CD4-positive, alpha-beta memory T cell (primary cell): ENCODE measurements at regions of chr19 and their contacts with region 1.

Region 1: GRCh38 chr19:7535035-7535992 is at the start of gene PNPLA6:
- DNase-seq: peak; percentile 89 to 93 (median 91)
- H3K4me3 ChIP-seq: peak within 1 kb of the TSS; percentile 80 to 93
- H3K4me3 Mint-ChIP-seq: peak within 1 kb of the TSS; percentile 90 to 98 (median 94)
- H3K27ac ChIP-seq: peak within 1 kb of the TSS; percentile 76
- H3K27ac Mint-ChIP-seq: peak within 1 kb of the TSS; percentile 93 to 98 (median 94)
- H3K4me1 ChIP-seq: peaks cover 25% of the 10 kb centered on the region
- H3K4me1 Mint-ChIP-seq: peaks cover 10 to 45% (median 26%) of the 10 kb centered on the region in 4 donors
- H3K27me3 ChIP-seq: no peaks in the 10 kb centered on the region
- H3K27me3 Mint-ChIP-seq: no peaks in the 10 kb centered on the region
- total RNA-seq, gene PNPLA6: 168 to 169 TPM

Region 2: DNA sequence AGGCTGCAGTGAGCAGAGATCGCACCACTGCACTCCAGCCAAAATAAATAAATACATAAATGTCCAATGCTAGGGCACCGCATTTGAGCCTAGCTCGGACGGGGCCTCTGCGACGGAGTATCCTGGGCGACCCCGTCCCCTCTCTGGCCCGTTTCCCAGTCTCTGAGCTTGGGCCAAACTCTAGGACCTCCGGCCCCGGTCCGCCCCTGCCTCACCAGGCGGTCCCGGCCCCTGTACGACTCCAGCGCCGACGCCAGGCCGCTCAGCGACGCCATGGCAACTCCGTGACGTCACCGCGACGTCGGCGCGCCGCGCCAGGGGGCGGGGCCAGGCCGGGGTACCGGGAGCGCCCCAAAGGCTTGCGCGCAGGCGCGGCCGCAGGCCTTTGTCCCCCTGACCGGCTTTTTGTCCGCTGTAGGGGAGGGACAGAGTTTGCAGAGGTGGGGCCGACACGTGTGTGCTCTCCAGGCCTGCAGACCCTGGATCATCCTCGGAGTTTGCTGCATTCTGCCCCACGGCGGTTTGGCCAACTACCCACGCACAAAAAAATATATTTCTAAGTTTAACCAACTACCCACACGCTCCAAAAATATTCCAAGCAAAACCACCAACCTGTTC is 46.5 kb before region 1 on chr19 and contains the start of gene PEX11G:
- CTCF ChIA-PET with region 1: no interaction called
- POLR2A ChIA-PET with region 1: interaction called, 4 read pairs
- intact Hi-C with region 1: loop called (anchors 1 kb)
- DNase-seq: peak; percentile 85 to 90 (median 88)
- H3K4me3 ChIP-seq: peak within 1 kb of the TSS; percentile 52 to 96
- H3K4me3 Mint-ChIP-seq: peak within 1 kb of the TSS; percentile 84 to 94 (median 90)
- H3K27ac ChIP-seq: peak within 1 kb of the TSS; percentile 76
- H3K27ac Mint-ChIP-seq: peak within 1 kb of the TSS; percentile 83 to 97 (median 92)
- H3K4me1 ChIP-seq: peaks cover 12% of the 10 kb centered on the region
- H3K4me1 Mint-ChIP-seq: peaks cover 3 to 22% (median 13%) of the 10 kb centered on the region in 4 donors
- H3K27me3 ChIP-seq: no peaks in the 10 kb centered on the region
- H3K27me3 Mint-ChIP-seq: no peaks in the 10 kb centered on the region
- total RNA-seq, gene PEX11G: 0.64 to 0.73 TPM

Region 3: GRCh38 chr19:7522072-7522922 is 13.0 kb before region 1 on chr19 and contains the start of gene MCOLN1:
- CTCF ChIA-PET with region 1: interaction called, 12 read pairs
- POLR2A ChIA-PET with region 1: interaction called, 94 read pairs
- intact Hi-C with region 1: loop called (anchors 1 kb)
- DNase-seq: peak; percentile 98 to 99 (median 98)
- H3K4me3 ChIP-seq: peak within 1 kb of the TSS; percentile 65 to 69
- H3K4me3 Mint-ChIP-seq: peak within 1 kb of the TSS; percentile 82 to 93 (median 87)
- H3K27ac ChIP-seq: peak within 1 kb of the TSS; percentile 42
- H3K27ac Mint-ChIP-seq: peak within 1 kb of the TSS; percentile 61 to 93 (median 88)
- H3K4me1 ChIP-seq: peaks cover 18% of the 10 kb centered on the region
- H3K4me1 Mint-ChIP-seq: peaks cover 7 to 19% (median 12%) of the 10 kb centered on the region in 4 donors
- H3K27me3 ChIP-seq: no peaks in the 10 kb centered on the region
- H3K27me3 Mint-ChIP-seq: peaks cover 2% of the 10 kb centered on the region in 2 donors
- total RNA-seq, gene MCOLN1: 14.1 to 14.9 TPM

Region 4: GRCh38 chr19:7636691-7637373 is 101.5 kb after region 1 on chr19 and contains the start of gene STXBP2:
- CTCF ChIA-PET with region 1: no interaction called
- POLR2A ChIA-PET with region 1: no interaction called
- intact Hi-C with region 1: loop called (anchors 2 kb)
- DNase-seq: peak; percentile 91 to 93 (median 92)
- H3K4me3 ChIP-seq: peak within 1 kb of the TSS; percentile 42 to 74
- H3K4me3 Mint-ChIP-seq: peak within 1 kb of the TSS; percentile 82 to 89 (median 84)
- H3K27ac ChIP-seq: peak within 1 kb of the TSS; percentile 77
- H3K27ac Mint-ChIP-seq: peak within 1 kb of the TSS; percentile 84 to 95 (median 94)
- H3K4me1 ChIP-seq: peaks cover 36% of the 10 kb centered on the region
- H3K4me1 Mint-ChIP-seq: peaks cover 20 to 52% (median 34%) of the 10 kb centered on the region in 4 donors
- H3K27me3 ChIP-seq: no peaks in the 10 kb centered on the region
- H3K27me3 Mint-ChIP-seq: no peaks in the 10 kb centered on the region
- total RNA-seq, gene STXBP2: 219 to 220 TPM